PC-9 (cell line): ENCODE measurements at regions of chr3 and their contacts with region 1.

Region 1: DNA sequence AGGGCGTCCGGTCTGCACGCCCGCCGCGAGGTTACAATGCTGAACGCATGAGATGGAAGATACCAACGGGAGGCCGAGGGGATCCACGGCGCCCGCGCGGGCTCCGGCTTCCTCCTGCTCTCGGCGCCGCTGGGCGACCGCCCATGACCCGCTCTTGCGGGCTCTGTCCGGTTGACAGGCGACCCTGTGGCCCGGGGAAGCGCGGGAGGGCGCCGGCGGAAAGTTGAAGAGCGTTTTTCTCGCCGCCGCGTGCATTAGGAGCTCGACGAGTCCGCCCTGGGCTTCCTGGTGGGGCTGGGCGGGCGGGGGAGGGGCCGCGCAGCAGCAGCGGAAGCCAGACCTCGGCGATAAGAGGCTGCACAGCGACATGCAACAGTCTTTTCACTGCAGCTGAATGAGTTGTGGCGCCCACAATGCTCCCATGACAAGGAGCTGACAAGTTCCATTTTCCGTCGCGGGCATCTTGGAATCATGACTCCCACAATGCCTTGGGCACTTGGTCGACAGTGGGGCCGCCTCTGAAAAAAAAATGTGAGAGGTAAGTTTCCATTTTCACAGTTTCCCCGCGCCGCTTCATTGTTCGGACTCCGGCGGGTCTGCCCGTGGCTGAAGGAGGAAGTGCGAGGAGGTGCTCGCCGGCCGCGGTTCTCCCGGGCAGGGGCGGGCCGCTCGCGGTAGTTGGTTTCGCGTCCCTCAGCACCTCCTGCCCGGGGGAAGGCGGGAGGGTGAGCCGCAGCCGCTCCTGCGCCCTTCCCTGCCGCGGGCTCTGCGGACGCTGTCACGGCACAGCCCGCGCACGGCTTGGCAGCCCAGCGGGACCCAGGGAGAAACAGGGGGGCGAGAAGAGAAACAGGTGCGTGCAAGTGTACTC is at the start of gene MBNL1:
- DNase-seq: peak; percentile 71 to 77
- H3K4me3 ChIP-seq: peak within 1 kb of the TSS; percentile 85
- H3K27ac ChIP-seq: peak within 1 kb of the TSS; percentile 88
- H3K4me1 ChIP-seq: peaks cover 53% of the 10 kb centered on the region
- H3K27me3 ChIP-seq: no peaks in the 10 kb centered on the region
- CTCF ChIP-seq: no peak
- total RNA-seq, gene MBNL1: 122 and 176 TPM in 2 replicates

Region 2: GRCh38 chr3:151305101-151305750 is 963.6 kb before region 1 on chr3:
- CTCF ChIA-PET with region 1: no interaction called
- POLR2A ChIA-PET with region 1: no interaction called
- intact Hi-C with region 1: loop called (anchors 10 kb)
- DNase-seq: peak; percentile 95 to 99
- H3K4me3 ChIP-seq: peak overlapping the region; percentile 51; the same call in 1 of the 2 replicates
- H3K27ac ChIP-seq: peak overlapping the region; percentile 96
- H3K4me1 ChIP-seq: peaks cover 77% of the 10 kb centered on the region
- H3K27me3 ChIP-seq: no peaks in the 10 kb centered on the region
- CTCF ChIP-seq: no peak

Region 3: DNA sequence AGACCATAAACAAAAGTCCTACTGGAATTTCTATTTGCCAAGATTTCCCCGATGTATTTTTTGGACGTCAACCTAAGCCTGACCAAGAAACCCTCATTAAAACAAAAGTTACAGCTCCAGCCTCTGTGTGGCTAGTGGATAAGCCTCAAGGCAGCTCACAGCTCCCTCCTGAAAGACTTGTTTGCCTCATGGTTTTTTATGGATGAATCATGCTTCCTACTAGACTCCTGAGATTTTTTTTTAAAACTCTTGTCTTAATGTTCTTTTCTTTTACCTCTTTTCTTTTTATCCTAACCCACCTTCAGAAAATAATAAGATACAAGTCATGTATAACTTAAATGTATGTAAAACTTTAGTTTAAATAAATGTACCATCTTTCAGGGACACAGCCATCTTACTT is 342.9 kb before region 1 on chr3:
- CTCF ChIA-PET with region 1: no interaction called
- POLR2A ChIA-PET with region 1: interaction called, 4 read pairs
- intact Hi-C with region 1: loop called (anchors 5 kb)
- DNase-seq: peak; percentile 44 to 73
- H3K4me3 ChIP-seq: no peak overlapping the region
- H3K27ac ChIP-seq: no peak overlapping the region
- H3K4me1 ChIP-seq: peaks cover 7% of the 10 kb centered on the region
- H3K27me3 ChIP-seq: no peaks in the 10 kb centered on the region
- CTCF ChIP-seq: no peak

Region 4: DNA sequence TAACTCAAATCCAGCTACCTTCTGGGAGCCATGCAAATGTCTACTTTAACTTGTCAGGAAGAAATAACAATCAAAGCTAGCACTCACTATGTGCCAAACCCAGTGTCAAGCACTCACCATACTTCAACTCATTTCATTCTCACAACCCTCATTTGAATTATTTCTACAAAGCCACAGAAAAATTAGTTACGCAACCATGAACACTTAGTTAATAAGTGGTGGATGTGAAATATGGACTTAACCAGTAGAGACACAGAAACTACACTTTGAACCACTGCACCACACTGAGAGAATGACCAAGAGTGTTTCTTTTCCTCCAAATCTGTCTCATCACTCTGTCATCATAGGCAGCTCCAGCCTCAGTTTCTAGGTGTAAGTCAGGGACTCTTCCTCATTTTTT is 91.0 kb before region 1 on chr3:
- CTCF ChIA-PET with region 1: no interaction called
- POLR2A ChIA-PET with region 1: no interaction called
- intact Hi-C with region 1: loop called (anchors 5 kb)
- DNase-seq: no peak
- H3K4me3 ChIP-seq: no peak overlapping the region
- H3K27ac ChIP-seq: no peak overlapping the region
- H3K4me1 ChIP-seq: peaks cover 16% of the 10 kb centered on the region
- H3K27me3 ChIP-seq: no peaks in the 10 kb centered on the region
- CTCF ChIP-seq: no peak

Region 5: GRCh38 chr3:152235709-152236298 is 33.0 kb before region 1 on chr3:
- CTCF ChIA-PET with region 1: no interaction called
- POLR2A ChIA-PET with region 1: no interaction called
- intact Hi-C with region 1: no loop called
- DNase-seq: peak; percentile 8 to 45
- H3K4me3 ChIP-seq: no peak overlapping the region
- H3K27ac ChIP-seq: no peak overlapping the region; the same call in 1 of the 2 replicates
- H3K4me1 ChIP-seq: peaks cover 16% of the 10 kb centered on the region
- H3K27me3 ChIP-seq: no peaks in the 10 kb centered on the region
- CTCF ChIP-seq: no peak

Region 6: DNA sequence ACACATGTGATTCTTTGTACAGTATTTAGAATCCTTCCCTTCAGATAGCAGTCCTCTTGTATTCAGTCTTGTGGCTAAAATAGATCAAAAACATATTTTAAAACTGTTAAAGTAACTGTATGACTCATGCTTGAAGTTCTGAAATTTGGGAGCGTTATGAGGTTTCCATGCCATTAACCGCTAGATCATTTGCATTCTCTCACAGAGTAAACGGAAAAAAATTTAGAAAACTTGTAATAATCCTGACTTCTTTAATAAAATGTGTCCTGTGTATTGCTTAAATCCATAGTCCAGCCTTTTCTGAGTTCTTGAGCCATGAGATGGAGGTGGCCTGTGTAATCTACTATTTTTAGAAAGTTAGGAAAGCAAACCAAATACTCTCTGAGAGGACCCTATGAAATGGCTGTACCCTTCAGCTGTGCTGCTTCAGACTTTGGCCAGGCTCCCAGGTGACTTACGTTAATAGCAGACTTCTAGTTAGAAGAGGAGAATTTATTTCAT is 33.8 kb after region 1 on chr3:
- CTCF ChIA-PET with region 1: no interaction called
- POLR2A ChIA-PET with region 1: interaction called, 11 read pairs
- intact Hi-C with region 1: loop called (anchors 2 kb)
- DNase-seq: no peak
- H3K4me3 ChIP-seq: no peak overlapping the region
- H3K27ac ChIP-seq: no peak overlapping the region
- H3K4me1 ChIP-seq: peaks cover 51% of the 10 kb centered on the region
- H3K27me3 ChIP-seq: no peaks in the 10 kb centered on the region
- CTCF ChIP-seq: no peak

Region 7: GRCh38 chr3:152350139-152350538 is 81.3 kb after region 1 on chr3:
- CTCF ChIA-PET with region 1: no interaction called
- POLR2A ChIA-PET with region 1: interaction called, 20 read pairs
- intact Hi-C with region 1: loop called (anchors 5 kb)
- DNase-seq: no peak
- H3K4me3 ChIP-seq: no peak overlapping the region
- H3K27ac ChIP-seq: peak overlapping the region; percentile 2; the same call in 1 of the 2 replicates
- H3K4me1 ChIP-seq: peaks cover 22% of the 10 kb centered on the region
- H3K27me3 ChIP-seq: no peaks in the 10 kb centered on the region
- CTCF ChIP-seq: no peak